OCI-LY7 (cell line): ENCODE measurements at regions of chr18 and their contacts with region 1.

Region 1: GRCh38 chr18:30280880-30281470 is 761.6 kb downstream of the DSC3 start:
- DNase-seq: peak; percentile 23
- H3K4me3 ChIP-seq: no peak overlapping the region
- H3K27ac ChIP-seq: no peak overlapping the region
- H3K4me1 ChIP-seq: no peaks in the 10 kb centered on the region
- CTCF ChIP-seq: peak; percentile 72

Region 2: GRCh38 chr18:29874519-29875098 is 406.4 kb before region 1 on chr18:
- CTCF ChIA-PET with region 1: no interaction called
- POLR2A ChIA-PET with region 1: no interaction called
- intact Hi-C with region 1: loop called (anchors 5 kb)
- DNase-seq: peak; percentile 5
- H3K4me3 ChIP-seq: no peak overlapping the region
- H3K27ac ChIP-seq: no peak overlapping the region
- H3K4me1 ChIP-seq: no peaks in the 10 kb centered on the region
- CTCF ChIP-seq: peak; percentile 68

Region 3: DNA sequence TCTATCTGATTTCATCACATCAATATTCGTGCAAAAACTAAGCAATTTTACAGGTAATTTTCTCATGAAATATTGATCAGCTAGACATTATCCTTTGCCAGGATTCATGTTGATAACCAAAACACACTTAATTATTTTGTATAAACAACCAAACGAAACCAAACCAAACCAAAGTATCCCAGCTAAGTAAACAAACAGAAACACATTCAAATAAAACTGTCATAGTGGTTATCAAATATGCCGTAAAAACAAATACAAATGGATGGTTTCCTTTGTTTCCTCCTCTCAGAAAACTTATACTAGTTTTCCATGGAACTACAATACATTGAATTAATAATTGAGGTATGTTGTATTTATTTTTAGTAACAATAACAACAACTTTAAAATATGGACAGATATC is 15.8 kb before region 1 on chr18:
- CTCF ChIA-PET with region 1: no interaction called
- POLR2A ChIA-PET with region 1: no interaction called
- intact Hi-C with region 1: no loop called
- DNase-seq: no peak
- H3K4me3 ChIP-seq: no peak overlapping the region
- H3K27ac ChIP-seq: no peak overlapping the region
- H3K4me1 ChIP-seq: no peaks in the 10 kb centered on the region
- CTCF ChIP-seq: no peak

Region 4: DNA sequence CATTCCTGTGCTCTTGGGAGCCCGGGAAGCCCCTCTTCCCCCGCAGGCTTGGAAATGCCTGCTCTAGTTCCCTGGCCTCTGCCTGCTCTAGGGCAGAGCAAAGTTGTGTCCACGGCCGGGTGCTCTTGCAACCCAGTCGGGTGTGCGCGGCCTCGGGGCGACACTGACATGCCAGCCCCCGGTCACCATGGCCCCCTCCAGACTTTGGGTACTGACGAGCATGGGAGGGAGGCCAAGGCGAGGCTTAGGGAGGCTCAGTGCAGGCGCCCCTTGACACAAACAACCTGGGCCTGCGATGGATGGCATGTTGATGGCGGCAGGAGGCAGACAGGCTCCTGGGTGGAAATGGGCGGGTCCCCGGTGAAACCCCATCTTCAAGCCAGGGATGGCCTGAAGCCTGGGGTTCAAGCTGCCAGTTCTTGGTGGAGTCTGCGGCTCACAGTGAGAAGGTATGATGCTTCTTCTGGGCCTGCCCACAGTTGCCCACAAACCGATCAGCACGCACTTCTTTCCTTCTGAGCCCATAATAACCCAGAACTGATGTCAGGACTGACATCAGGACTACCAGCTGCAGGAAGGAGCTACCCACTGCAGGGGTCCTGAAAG is 71.7 kb after region 1 on chr18:
- CTCF ChIA-PET with region 1: no interaction called
- POLR2A ChIA-PET with region 1: no interaction called
- intact Hi-C with region 1: no loop called
- DNase-seq: no peak
- H3K4me3 ChIP-seq: no peak overlapping the region
- H3K27ac ChIP-seq: no peak overlapping the region
- H3K4me1 ChIP-seq: no peaks in the 10 kb centered on the region
- CTCF ChIP-seq: no peak